ENCODE measurements at regions of chr14 and their contacts with region 1.

Region 1: GRCh38 chr14:72023722-72024407 is 91.6 kb downstream of the RGS6 start:
- DNase-seq: peak in 6 of 7 donors; percentile 14 to 59 (median 24)
- H3K4me3 ChIP-seq: no peak overlapping the region
- H3K27ac ChIP-seq: no peak overlapping the region
- H3K4me1 ChIP-seq: no peaks in the 10 kb centered on the region
- H3K27me3 ChIP-seq: peaks cover 4% of the 10 kb centered on the region
- CTCF ChIP-seq: peak; percentile 13 to 53 (median 44)
- POLR2A ChIP-seq: no peak

Region 2: GRCh38 chr14:72291908-72292688 is 268.2 kb after region 1 on chr14:
- intact Hi-C with region 1: loop called in 1 of 2 experiments (anchors 10 kb)
- DNase-seq: peak; percentile 10 to 61 (median 20)
- H3K4me3 ChIP-seq: no peak overlapping the region
- H3K27ac ChIP-seq: no peak overlapping the region
- H3K4me1 ChIP-seq: no peaks in the 10 kb centered on the region
- H3K27me3 ChIP-seq: no peaks in the 10 kb centered on the region
- CTCF ChIP-seq: peak; percentile 47 to 70 (median 52)
- POLR2A ChIP-seq: no peak